Colonic mucosa (tissue), 4 donors: ENCODE measurements at regions of chr6 and their contacts with region 1.

Region 1: GRCh38 chr6:31271641-31272357 is at the start of gene HLA-C:
- DNase-seq: peak; percentile 94
- H3K4me3 ChIP-seq: peak within 1 kb of the TSS; percentile 70
- H3K27ac ChIP-seq: peak within 1 kb of the TSS; percentile 98
- H3K4me1 ChIP-seq: no peaks in the 10 kb centered on the region
- H3K27me3 ChIP-seq: no peaks in the 10 kb centered on the region
- CTCF ChIP-seq: no peak
- total RNA-seq, gene HLA-C: 576 to 1,321 TPM

Region 2: GRCh38 chr6:31203345-31203979 is 68.3 kb before region 1 on chr6:
- intact Hi-C with region 1: loop called (anchors 5 kb)
- DNase-seq: peak; percentile 66
- H3K4me3 ChIP-seq: peak overlapping the region; percentile 20
- H3K27ac ChIP-seq: peak overlapping the region; percentile 88
- H3K4me1 ChIP-seq: peaks cover 7% of the 10 kb centered on the region
- H3K27me3 ChIP-seq: no peaks in the 10 kb centered on the region
- CTCF ChIP-seq: no peak

Region 3: GRCh38 chr6:31351401-31352309 is 79.9 kb after region 1 on chr6:
- intact Hi-C with region 1: loop called (anchors 5 kb)
- DNase-seq: no peak
- H3K4me3 ChIP-seq: no peak overlapping the region
- H3K27ac ChIP-seq: no peak overlapping the region
- H3K4me1 ChIP-seq: no peaks in the 10 kb centered on the region
- H3K27me3 ChIP-seq: no peaks in the 10 kb centered on the region
- CTCF ChIP-seq: no peak

Region 4: GRCh38 chr6:31366693-31367470 is 95.1 kb after region 1 on chr6:
- intact Hi-C with region 1: loop called (anchors 5 kb)
- DNase-seq: peak; percentile 94
- H3K4me3 ChIP-seq: peak overlapping the region; percentile 3
- H3K27ac ChIP-seq: no peak overlapping the region
- H3K4me1 ChIP-seq: no peaks in the 10 kb centered on the region
- H3K27me3 ChIP-seq: no peaks in the 10 kb centered on the region
- CTCF ChIP-seq: peak; percentile 80

Region 5: GRCh38 chr6:31525932-31526591 is 254.3 kb after region 1 on chr6:
- intact Hi-C with region 1: no loop called
- DNase-seq: no peak
- H3K4me3 ChIP-seq: no peak overlapping the region
- H3K27ac ChIP-seq: no peak overlapping the region
- H3K4me1 ChIP-seq: no peaks in the 10 kb centered on the region
- H3K27me3 ChIP-seq: no peaks in the 10 kb centered on the region
- CTCF ChIP-seq: no peak